AG04450 (cell line): ENCODE measurements at regions of chr3 and their contacts with region 1.

Region 1: GRCh38 chr3:128680602-128681368 is 30.2 kb upstream of the RPN1 start:
- DNase-seq: peak; percentile 95
- H3K4me3 ChIP-seq: peak overlapping the region; percentile 69
- H3K27ac ChIP-seq: peak overlapping the region; percentile 88
- H3K27me3 ChIP-seq: no peaks in the 10 kb centered on the region
- CTCF ChIP-seq: peak; percentile 95

Region 2: DNA sequence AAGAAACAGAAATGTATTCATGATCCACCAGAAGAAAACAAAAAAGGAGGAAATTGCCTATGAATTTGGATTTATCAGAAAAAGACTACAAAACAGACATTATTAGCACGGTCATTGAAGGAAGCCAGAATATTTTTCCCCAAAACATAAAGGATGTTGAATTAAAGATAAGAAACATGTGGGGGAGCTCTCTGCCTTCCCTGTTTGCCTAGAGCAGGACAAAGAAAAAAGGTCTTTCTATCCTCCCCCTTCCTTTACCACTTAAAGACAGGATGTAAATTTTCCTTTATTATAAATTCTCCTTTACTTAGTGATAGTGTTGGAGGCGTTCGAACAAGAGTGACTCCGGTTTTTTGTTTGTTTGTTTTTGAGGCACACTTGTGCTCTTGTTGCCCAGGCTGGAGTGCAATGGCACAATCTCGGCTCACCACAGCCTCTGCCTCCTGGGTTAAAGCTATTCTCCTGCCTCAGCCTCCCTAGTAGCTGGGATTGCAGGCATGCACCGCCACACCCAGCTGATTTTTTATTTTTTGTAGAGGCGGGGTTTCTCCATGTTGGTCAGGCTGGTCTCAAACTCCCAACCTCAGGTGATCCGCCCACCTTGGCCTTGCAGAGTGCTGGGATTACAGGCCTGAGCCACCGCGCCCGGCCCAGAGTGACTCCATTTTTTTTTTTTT is 15.3 kb before region 1 on chr3:
- CTCF ChIA-PET with region 1: interaction called, 10 read pairs
- POLR2A ChIA-PET with region 1: interaction called, 4 read pairs
- DNase-seq: no peak
- H3K4me3 ChIP-seq: no peak overlapping the region
- H3K27ac ChIP-seq: no peak overlapping the region
- H3K27me3 ChIP-seq: peaks cover 9% of the 10 kb centered on the region
- CTCF ChIP-seq: no peak

Region 3: DNA sequence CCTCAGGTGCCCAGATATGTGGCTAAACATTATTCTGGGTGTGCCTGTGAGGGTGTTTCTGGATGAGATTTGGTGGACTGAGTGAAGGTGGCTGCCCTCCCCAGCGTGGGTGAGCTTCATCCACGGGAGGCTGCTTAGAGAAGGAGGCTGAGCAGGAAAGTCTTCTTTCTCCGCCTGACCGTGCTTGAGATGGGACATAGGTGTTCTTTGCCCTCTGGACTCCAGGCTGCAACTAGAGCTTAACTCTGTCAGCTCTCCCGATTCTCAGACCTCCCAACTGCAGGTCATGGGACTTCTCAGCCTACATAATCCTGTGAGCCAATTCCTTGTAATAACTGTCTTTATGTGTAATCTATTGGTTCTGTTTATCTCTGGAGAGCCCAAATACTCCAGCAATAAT is 79.3 kb after region 1 on chr3:
- CTCF ChIA-PET with region 1: interaction called, 20 read pairs
- POLR2A ChIA-PET with region 1: interaction called, 5 read pairs
- DNase-seq: no peak
- H3K4me3 ChIP-seq: no peak overlapping the region
- H3K27ac ChIP-seq: peak overlapping the region; percentile 31
- H3K27me3 ChIP-seq: no peaks in the 10 kb centered on the region
- CTCF ChIP-seq: no peak

Region 4: GRCh38 chr3:128794770-128795649 is 114.2 kb after region 1 on chr3:
- CTCF ChIA-PET with region 1: interaction called, 103 read pairs
- POLR2A ChIA-PET with region 1: interaction called, 8 read pairs
- DNase-seq: peak; percentile 16
- H3K4me3 ChIP-seq: no peak overlapping the region
- H3K27ac ChIP-seq: no peak overlapping the region
- H3K27me3 ChIP-seq: no peaks in the 10 kb centered on the region
- CTCF ChIP-seq: peak; percentile 79

Region 5: DNA sequence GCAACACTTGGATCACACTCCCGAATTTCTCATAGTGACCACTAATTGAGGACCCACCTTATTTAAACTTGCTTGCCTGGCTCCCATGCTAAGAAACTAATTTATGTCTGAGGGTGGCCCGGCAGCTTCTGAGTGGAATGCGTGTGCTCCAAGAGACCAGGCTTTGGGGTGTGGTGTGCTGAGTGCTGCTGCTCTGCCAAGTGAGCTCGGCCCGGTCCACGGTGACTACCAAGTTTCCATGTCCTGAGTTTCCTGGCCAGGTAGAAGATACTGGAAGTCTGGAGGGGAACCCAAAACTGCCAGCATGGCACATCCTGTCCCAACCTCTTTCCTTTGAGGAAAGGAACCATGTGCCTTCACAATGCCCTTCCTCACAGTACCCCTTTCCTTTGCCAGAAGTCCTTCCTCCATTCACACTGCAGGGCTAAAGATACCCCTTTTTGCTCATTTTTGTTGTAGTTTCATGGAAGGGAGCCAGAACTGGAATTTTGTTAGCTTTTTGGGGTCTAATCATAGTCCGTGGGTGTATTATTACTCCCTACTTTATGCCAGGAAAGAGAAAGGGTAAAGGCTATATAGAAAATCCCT is 139.6 kb after region 1 on chr3:
- CTCF ChIA-PET with region 1: interaction called, 13 read pairs
- POLR2A ChIA-PET with region 1: interaction called, 4 read pairs
- DNase-seq: no peak
- H3K4me3 ChIP-seq: no peak overlapping the region
- H3K27ac ChIP-seq: no peak overlapping the region
- H3K27me3 ChIP-seq: no peaks in the 10 kb centered on the region
- CTCF ChIP-seq: no peak

Region 6: GRCh38 chr3:128879125-128879969 is 198.6 kb after region 1 on chr3 and contains the start of gene ACAD9:
- CTCF ChIA-PET with region 1: interaction called, 22 read pairs
- POLR2A ChIA-PET with region 1: interaction called, 17 read pairs
- DNase-seq: peak; percentile 95
- H3K4me3 ChIP-seq: peak within 1 kb of the TSS; percentile 87
- H3K27ac ChIP-seq: peak within 1 kb of the TSS; percentile 97
- H3K27me3 ChIP-seq: no peaks in the 10 kb centered on the region
- CTCF ChIP-seq: no peak
- polyA plus RNA-seq, gene ACAD9: 31.0 and 35.2 TPM in 2 replicates